ENCODE measurements at regions of chr12 and their contacts with region 1.

Region 1: DNA sequence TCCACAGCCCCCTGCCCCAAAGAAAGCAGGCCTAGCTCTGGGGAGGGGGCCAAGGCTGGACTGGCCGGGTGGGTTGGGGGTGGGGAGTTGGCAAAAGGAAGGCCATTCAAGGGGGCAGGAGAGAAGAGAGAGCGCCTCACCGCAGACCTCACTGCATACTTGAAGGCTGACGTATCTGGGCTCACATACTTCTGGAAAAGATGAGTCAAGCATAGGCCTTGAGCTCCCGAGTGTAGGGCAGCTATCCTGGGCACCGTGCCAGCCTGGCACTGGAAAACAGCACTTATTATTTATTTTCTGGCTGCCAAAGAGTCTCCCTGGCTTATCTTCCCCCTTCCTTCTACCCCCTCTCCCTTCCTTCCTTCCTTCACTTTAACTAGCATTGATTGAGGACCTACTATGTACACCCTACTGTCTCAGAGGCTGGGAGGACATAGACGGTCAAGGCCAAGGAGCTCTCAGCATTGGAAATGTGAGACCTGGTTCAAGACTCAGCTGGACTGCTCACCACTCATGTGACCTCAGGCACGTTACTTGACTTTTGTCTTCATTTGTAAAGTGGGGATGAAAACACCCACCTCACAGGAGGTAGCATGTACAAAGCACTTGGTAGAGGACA is 468 bp upstream of the KRT80 start:
- DNase-seq: peak; percentile 95
- H3K4me3 ChIP-seq: no peak overlapping the region
- H3K27ac ChIP-seq: peak overlapping the region; percentile 85
- H3K27me3 ChIP-seq: no peaks in the 10 kb centered on the region
- CTCF ChIP-seq: no peak

Region 2: DNA sequence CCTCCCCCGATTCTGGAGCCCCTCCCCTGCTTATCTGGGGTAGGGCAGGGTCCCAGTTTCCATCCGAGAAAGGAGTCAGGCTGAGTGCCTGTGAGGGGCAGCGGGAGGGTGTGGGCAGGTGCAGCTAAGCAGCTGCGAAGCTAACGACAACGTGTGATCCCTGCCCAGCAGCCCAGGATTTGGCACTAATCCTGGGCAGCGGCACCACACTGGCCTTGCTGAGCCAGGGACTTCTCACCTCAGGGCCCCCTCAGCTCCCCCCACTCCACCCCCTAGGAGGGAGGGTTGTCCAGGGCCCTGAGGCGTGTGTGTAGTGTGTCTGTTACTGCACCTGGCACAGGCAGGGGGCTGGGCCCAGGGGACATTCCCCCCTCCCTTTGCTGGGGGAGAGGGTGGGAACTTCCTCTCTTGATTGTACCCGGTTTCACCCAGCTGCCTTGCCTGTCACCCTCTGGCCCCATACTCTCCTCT is 111.0 kb before region 1 on chr12:
- CTCF ChIA-PET with region 1: no interaction called
- POLR2A ChIA-PET with region 1: no interaction called
- DNase-seq: no peak
- H3K4me3 ChIP-seq: peak overlapping the region; percentile 35
- H3K27ac ChIP-seq: peak overlapping the region; percentile 85
- H3K27me3 ChIP-seq: no peaks in the 10 kb centered on the region
- CTCF ChIP-seq: no peak

Region 3: GRCh38 chr12:52181746-52182145 is 10.5 kb before region 1 on chr12:
- CTCF ChIA-PET with region 1: interaction called, 3 read pairs
- POLR2A ChIA-PET with region 1: interaction called, 17 read pairs
- DNase-seq: peak; percentile 58
- H3K4me3 ChIP-seq: no peak overlapping the region
- H3K27ac ChIP-seq: peak overlapping the region; percentile 94
- H3K27me3 ChIP-seq: no peaks in the 10 kb centered on the region
- CTCF ChIP-seq: no peak

Region 4: DNA sequence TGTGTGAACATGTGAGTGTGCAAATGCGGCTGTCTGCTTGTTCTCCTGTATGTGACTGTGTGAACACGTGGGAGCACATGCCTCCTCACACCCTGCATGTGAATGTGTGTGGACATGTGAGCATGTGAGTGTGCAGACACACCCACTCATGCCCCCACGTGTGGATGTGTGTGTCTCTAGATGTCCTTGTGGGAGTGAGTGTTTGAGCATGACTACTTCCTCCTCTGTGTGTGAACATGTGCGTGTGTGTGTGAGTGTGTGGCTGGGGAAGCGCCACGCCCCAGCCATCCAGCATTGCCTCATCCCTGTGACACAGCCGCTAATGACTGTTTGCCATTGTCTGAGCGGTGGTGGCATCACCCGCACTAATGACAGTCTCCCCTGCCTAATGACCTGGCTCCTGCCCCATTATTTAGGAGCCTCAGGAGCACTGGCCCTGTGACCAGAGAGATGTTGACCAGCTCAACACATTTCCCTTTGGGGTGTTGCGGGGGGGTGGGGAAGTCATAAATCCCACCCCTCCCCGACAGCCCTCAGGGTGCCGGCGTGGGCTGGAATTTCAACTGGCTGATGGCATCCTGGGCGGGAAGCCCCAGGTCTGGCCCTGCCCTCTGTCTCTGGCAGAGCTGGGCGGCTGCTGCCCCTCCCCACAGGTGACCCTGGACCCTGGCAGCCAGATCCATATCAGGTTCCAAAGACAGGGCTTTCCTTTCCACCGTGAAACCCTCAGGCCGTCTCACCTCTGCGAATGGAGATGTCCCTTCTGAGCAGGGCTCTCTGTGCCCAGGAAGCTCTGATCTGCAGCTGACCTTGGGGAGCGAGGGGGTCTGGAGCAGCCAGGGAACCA is 11.0 kb after region 1 on chr12:
- CTCF ChIA-PET with region 1: interaction called, 3 read pairs
- POLR2A ChIA-PET with region 1: interaction called, 10 read pairs
- DNase-seq: no peak
- H3K4me3 ChIP-seq: no peak overlapping the region
- H3K27ac ChIP-seq: peak overlapping the region; percentile 31
- H3K27me3 ChIP-seq: no peaks in the 10 kb centered on the region
- CTCF ChIP-seq: no peak

Region 5: DNA sequence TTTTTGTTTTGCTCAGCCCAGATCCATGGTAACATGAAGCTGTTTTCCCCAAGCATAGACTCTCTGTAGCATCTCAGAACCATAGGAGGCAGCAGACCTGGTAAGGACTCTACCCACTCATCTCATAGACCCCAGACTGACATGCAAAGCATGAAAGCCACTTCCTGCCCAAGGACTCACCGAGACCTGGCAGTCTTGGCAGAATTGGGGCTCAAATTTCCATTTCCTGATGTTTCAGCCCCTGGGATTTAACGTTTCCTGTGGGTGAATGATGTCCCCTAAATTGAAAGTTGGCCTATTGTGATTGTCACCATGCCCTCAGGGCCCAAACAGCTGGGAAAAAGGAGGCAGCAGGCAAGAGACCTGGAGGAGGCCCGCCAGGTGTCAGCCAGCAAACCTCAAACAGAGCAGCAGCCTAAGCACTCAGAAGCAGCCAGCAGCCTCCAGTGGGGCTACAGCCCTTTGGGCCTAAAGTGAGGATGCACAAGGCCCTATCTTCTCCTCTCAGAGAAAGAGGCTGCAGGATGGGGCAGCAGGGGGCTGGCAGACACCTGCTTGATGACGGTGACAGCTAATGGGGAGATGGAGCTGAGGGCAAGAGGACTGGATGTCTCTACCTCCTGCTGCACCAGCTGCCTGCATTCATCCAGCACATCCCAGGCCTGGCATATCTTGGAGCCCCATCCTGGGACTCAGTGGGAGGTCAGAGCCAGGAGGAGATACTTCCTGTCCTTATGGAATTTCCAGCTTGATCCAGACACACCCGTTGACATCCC is 166.5 kb after region 1 on chr12:
- CTCF ChIA-PET with region 1: no interaction called
- POLR2A ChIA-PET with region 1: no interaction called
- DNase-seq: no peak
- H3K4me3 ChIP-seq: no peak overlapping the region
- H3K27ac ChIP-seq: no peak overlapping the region
- H3K27me3 ChIP-seq: peaks cover 25% of the 10 kb centered on the region
- CTCF ChIP-seq: no peak

Region 6: GRCh38 chr12:52627395-52628110 is 435.3 kb after region 1 on chr12:
- CTCF ChIA-PET with region 1: no interaction called
- POLR2A ChIA-PET with region 1: no interaction called
- DNase-seq: no peak
- H3K4me3 ChIP-seq: no peak overlapping the region
- H3K27ac ChIP-seq: no peak overlapping the region
- H3K27me3 ChIP-seq: peaks cover 14% of the 10 kb centered on the region
- CTCF ChIP-seq: no peak

Measured in AG04450 (cell line).